PC-3 (cell line): ENCODE measurements at regions of chr5 and their contacts with region 1.

Region 1: GRCh38 chr5:80481019-80481893 is 6.6 kb upstream of the FAM151B start:
- DNase-seq: peak; percentile 66
- ATAC-seq: peak; percentile 69
- H3K4me3 ChIP-seq: no peak overlapping the region
- H3K27ac ChIP-seq: no peak overlapping the region
- H3K4me1 ChIP-seq: no peaks in the 10 kb centered on the region
- H3K27me3 ChIP-seq: no peaks in the 10 kb centered on the region
- CTCF ChIP-seq: peak; percentile 76

Region 2: DNA sequence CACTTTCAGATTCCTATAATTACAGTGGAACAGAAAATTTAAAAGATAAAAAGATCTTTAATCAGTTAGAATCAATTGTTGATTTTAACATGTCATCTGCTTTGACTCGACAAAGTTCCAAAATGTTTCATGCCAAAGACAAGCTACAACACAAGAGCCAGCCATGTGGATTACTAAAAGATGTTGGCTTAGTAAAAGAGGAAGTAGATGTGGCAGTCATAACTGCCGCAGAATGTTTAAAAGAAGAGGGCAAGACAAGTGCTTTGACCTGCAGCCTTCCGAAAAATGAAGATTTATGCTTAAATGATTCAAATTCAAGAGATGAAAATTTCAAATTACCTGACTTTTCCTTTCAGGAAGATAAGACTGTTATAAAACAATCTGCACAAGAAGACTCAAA is 43.9 kb before region 1 on chr5:
- CTCF ChIA-PET with region 1: no interaction called
- POLR2A ChIA-PET with region 1: no interaction called
- intact Hi-C with region 1: no loop called
- DNase-seq: no peak
- ATAC-seq: no peak
- H3K4me3 ChIP-seq: no peak overlapping the region
- H3K27ac ChIP-seq: no peak overlapping the region
- H3K4me1 ChIP-seq: no peaks in the 10 kb centered on the region
- H3K27me3 ChIP-seq: no peaks in the 10 kb centered on the region
- CTCF ChIP-seq: no peak

Region 3: DNA sequence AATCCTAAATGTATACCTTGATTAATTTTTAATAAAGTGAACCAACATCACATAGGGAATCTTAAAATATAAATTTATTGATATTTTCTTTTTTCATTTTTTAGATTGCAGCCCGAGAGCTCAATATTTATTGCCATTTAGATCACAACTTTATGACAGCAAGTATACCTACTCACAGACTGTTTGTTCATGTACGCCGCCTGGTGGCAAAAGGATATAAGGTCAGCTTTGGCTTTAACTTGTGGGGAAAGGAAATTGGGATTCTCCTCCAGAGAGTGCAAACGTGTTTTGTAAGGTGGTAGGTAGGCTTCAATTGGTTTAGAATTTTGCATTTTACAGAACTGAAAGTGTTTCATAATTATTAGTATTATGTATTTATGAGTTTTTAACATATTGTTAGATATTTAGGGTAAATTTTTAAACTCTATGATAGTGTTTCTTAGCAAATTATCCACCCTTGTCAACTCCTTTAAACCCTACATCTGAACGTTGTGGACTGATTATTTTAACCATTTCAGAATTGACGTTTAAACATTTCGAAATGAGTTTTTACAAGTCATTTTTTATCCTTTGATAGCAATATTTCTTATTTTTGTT is 191.0 kb after region 1 on chr5:
- CTCF ChIA-PET with region 1: interaction called, 4 read pairs
- POLR2A ChIA-PET with region 1: no interaction called
- intact Hi-C with region 1: loop called (anchors 2 kb)
- DNase-seq: peak; percentile 79
- ATAC-seq: peak; percentile 79
- H3K4me3 ChIP-seq: no peak overlapping the region
- H3K27ac ChIP-seq: no peak overlapping the region
- H3K4me1 ChIP-seq: no peaks in the 10 kb centered on the region
- H3K27me3 ChIP-seq: no peaks in the 10 kb centered on the region
- CTCF ChIP-seq: peak; percentile 63

Region 4: DNA sequence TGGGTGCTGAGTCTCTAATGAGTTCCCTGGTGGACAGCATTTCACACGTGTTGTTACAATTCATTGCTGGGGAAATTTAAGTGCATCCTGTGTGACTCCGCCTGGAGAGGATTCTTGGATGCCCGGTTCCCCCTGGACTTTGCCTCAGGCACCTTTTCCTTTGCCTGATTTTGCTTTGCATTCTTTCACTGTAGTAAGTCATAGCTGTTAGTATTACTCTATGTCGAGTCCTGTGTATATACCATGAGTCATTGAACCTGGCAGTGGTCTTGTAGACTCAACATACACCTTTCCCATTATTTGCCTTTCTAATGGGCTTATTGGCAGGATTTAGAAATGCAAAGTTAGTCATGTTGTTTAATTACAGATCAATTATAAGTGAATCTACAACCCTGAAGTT is 255.5 kb after region 1 on chr5:
- CTCF ChIA-PET with region 1: no interaction called
- POLR2A ChIA-PET with region 1: no interaction called
- intact Hi-C with region 1: no loop called
- DNase-seq: peak; percentile 91
- ATAC-seq: peak; percentile 99
- H3K4me3 ChIP-seq: no peak overlapping the region
- H3K27ac ChIP-seq: peak overlapping the region; percentile 73
- H3K4me1 ChIP-seq: peaks cover 12% of the 10 kb centered on the region
- H3K27me3 ChIP-seq: no peaks in the 10 kb centered on the region
- CTCF ChIP-seq: no peak